AG04449 (cell line): ENCODE measurements at regions of chr11 and their contacts with region 1.

Region 1: GRCh38 chr11:12888525-12889158 is 120.5 kb upstream of the RASSF10 start:
- DNase-seq: peak; percentile 71
- H3K4me3 ChIP-seq: no peak overlapping the region
- CTCF ChIP-seq: peak; percentile 75

Region 2: GRCh38 chr11:12680246-12680939 is 208.2 kb before region 1 on chr11:
- CTCF ChIA-PET with region 1: interaction called, 28 read pairs
- POLR2A ChIA-PET with region 1: no interaction called
- DNase-seq: peak; percentile 60
- H3K4me3 ChIP-seq: peak overlapping the region; percentile 31
- CTCF ChIP-seq: no peak

Region 3: DNA sequence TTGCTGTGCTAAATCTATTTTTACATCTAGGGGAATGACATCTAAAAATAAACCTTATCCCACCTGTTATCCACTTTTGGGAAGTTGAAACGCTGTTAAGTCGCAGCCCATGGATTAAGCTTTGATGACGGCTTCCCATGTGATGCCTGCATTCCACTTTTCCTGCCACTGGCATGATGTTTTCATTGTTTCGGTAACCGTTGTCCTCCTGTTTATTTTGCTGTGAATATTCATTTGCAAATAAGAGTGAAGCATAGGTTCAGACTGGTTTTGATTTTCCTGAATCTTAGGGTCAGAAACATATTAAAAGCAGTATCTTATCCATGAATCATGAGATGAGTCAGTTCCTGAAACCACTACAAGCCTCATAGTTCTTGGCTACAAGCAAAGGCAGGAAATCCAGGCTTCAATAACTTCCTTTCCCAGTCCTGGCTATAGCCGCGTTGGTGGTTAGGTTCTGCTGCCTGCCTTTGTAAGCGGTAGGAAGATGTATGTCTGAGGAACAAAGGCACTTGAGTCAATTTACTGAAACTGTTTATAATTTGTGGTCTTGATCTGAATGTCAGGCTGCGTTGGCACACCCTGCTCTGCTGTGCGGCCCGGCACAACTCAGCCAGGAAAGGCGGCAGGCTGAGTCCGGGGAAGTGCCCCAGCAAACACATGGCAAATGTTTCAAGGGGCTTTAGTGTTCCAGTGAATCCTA is 195.0 kb before region 1 on chr11:
- CTCF ChIA-PET with region 1: interaction called, 17 read pairs
- POLR2A ChIA-PET with region 1: no interaction called
- DNase-seq: peak; percentile 91
- H3K4me3 ChIP-seq: peak overlapping the region; percentile 42
- CTCF ChIP-seq: no peak

Region 4: DNA sequence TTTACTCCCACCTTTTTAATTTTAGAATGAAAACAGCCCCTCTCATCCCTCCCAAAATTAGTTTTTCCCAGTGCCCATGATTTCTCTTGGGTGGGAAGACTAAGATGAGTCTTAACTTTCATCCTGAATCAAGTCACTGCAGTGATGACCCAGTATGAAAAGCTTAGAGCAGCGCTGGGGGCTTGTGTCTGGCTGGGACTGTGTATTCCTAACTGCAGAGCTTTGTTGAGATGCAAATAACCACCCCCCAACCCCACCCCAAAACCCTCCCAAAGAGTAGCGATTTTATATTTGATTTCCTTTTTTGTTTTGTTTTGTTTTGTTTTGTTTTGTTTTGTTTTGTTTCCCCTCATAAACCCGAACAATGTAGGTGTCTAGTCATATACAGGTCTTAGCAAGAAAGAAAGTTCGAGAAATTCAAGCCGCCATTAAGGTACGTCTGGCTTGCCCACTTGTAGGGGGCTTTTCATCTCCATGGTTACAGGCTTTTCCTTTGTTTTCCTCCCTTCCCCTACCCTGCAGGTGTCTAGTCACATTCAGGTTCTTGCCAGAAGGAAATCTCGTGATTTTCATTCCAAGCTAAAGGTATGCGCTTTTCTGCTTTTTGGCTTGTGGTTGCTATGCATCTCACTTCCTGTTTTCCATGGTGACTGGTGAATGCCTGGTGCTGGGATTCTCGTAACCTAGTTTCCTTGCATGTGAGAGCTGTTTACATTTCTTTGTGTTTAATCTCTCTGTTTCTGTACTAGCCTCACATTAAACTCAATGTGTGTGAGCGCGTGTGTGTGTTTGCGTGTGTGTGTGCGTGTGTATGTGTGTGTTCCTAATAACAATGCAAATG is 24.1 kb before region 1 on chr11:
- CTCF ChIA-PET with region 1: interaction called, 18 read pairs
- POLR2A ChIA-PET with region 1: no interaction called
- DNase-seq: peak; percentile 82
- H3K4me3 ChIP-seq: no peak overlapping the region
- CTCF ChIP-seq: no peak

Region 5: GRCh38 chr11:12871788-12872321 is 16.8 kb before region 1 on chr11:
- CTCF ChIA-PET with region 1: interaction called, 37 read pairs
- POLR2A ChIA-PET with region 1: no interaction called
- DNase-seq: no peak
- H3K4me3 ChIP-seq: no peak overlapping the region
- CTCF ChIP-seq: no peak

Region 6: GRCh38 chr11:12876988-12877387 is 11.7 kb before region 1 on chr11:
- CTCF ChIA-PET with region 1: interaction called, 37 read pairs
- POLR2A ChIA-PET with region 1: interaction called, 3 read pairs
- DNase-seq: no peak
- H3K4me3 ChIP-seq: no peak overlapping the region
- CTCF ChIP-seq: no peak

Region 7: GRCh38 chr11:12900496-12900895 is 11.9 kb after region 1 on chr11:
- CTCF ChIA-PET with region 1: interaction called, 38 read pairs
- POLR2A ChIA-PET with region 1: interaction called, 3 read pairs
- DNase-seq: peak; percentile 89
- H3K4me3 ChIP-seq: no peak overlapping the region
- CTCF ChIP-seq: no peak

Region 8: GRCh38 chr11:13080861-13081405 is 192.3 kb after region 1 on chr11:
- CTCF ChIA-PET with region 1: no interaction called
- POLR2A ChIA-PET with region 1: no interaction called
- DNase-seq: no peak
- H3K4me3 ChIP-seq: no peak overlapping the region
- CTCF ChIP-seq: no peak